GM12878 (cell line): ENCODE measurements at regions of chr3 and their contacts with region 1.

Region 1: GRCh38 chr3:195863121-195864006 is 45.0 kb downstream of the TNK2 start:
- DNase-seq: no peak
- ATAC-seq: peak; percentile 97
- H3K4me3 ChIP-seq: no peak overlapping the region
- H3K27ac ChIP-seq: no peak overlapping the region
- H3K4me1 ChIP-seq: no peaks in the 10 kb centered on the region
- H3K27me3 ChIP-seq: no peaks in the 10 kb centered on the region
- CTCF ChIP-seq: peak; percentile 77 to 96 (median 80)
- EP300 ChIP-seq: no peak
- POLR2A ChIP-seq: no peak
- RAD21 ChIP-seq: peak; percentile 62

Region 2: GRCh38 chr3:195921334-195921791 is 58.0 kb after region 1 on chr3:
- CTCF ChIA-PET with region 1: interaction called, 173 read pairs
- POLR2A ChIA-PET with region 1: no interaction called
- RAD21 ChIA-PET with region 1: interaction called, 32 read pairs
- SMC1A ChIA-PET with region 1: interaction called, 68 read pairs
- in situ Hi-C with region 1: no loop called
- intact Hi-C with region 1: no loop called
- DNase-seq: no peak
- ATAC-seq: no peak
- H3K4me3 ChIP-seq: no peak overlapping the region
- H3K27ac ChIP-seq: no peak overlapping the region
- H3K4me1 ChIP-seq: no peaks in the 10 kb centered on the region
- H3K27me3 ChIP-seq: no peaks in the 10 kb centered on the region
- CTCF ChIP-seq: no peak
- EP300 ChIP-seq: no peak
- POLR2A ChIP-seq: no peak
- RAD21 ChIP-seq: no peak

Region 3: GRCh38 chr3:196044513-196044912 is 181.1 kb after region 1 on chr3:
- CTCF ChIA-PET with region 1: no interaction called
- POLR2A ChIA-PET with region 1: no interaction called
- RAD21 ChIA-PET with region 1: no interaction called
- SMC1A ChIA-PET with region 1: no interaction called
- in situ Hi-C with region 1: no loop called
- intact Hi-C with region 1: no loop called
- DNase-seq: no peak
- ATAC-seq: no peak
- H3K4me3 ChIP-seq: no peak overlapping the region
- H3K27ac ChIP-seq: no peak overlapping the region
- H3K4me1 ChIP-seq: no peaks in the 10 kb centered on the region
- H3K27me3 ChIP-seq: no peaks in the 10 kb centered on the region
- CTCF ChIP-seq: no peak
- EP300 ChIP-seq: no peak
- POLR2A ChIP-seq: 0 out of 2 replicates have a peak, but pooled peaks have one; percentile 33
- RAD21 ChIP-seq: no peak